HepG2 (cell line): ENCODE measurements at regions of chr7 and their contacts with region 1.

Region 1: DNA sequence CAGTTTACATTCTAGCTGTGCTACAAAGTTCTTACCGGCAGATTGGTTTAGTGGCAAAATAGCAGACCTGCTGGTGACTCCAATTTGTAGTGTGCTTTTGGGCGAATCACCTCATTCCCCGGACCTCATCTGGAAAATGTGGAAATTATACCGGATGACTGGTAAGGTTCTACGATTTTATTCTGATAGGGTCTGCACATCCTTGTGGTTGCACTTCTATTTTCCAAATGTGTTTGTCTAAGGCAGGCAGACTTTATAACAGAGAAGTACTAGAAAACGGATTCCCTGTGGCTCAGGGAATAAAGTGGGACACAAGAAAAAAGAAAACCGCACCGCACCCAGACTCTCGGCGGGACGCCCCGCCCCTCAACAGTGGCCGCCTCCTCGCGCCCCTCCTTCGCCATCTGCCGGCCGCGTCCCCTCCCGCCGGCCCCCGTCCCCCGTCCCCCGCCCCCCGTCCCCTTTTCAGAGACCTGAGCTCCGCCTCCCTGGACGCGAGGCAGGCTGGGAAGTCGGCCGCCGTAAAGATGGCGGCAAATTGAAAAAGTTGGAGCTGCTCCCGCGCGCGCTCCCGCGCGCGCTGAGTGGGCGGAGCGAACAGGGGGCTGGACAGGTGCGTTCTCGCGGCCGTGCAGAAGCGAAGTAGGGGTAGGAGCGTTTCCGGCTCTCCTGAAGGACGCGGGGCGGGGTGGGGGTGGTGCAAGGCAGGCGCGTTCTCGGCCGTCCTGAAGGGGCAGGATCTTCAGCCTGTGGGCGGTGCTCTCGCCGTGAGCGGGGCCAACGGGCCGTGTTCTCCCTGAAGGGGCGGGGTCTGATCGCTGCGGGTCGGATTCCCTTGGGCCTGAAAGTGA is 531 bp upstream of the CCM2 start:
- DNase-seq: peak; percentile 97
- ATAC-seq: peak; percentile 95
- H3K4me3 ChIP-seq: peak overlapping the region; percentile 74 to 99 (median 80)
- H3K27ac ChIP-seq: peak overlapping the region; percentile 70
- H3K4me1 ChIP-seq: peaks cover 23% of the 10 kb centered on the region
- H3K27me3 ChIP-seq: no peaks in the 10 kb centered on the region
- CTCF ChIP-seq: peak; percentile 26; the same call in 1 of the 2 replicates
- EP300 ChIP-seq: no peak
- POLR2A ChIP-seq: peak; percentile 25 to 59; a peak in 3 of 4 replicates
- RAD21 ChIP-seq: 0 out of 2 replicates have a peak, but pooled peaks have one; percentile 18

Region 2: GRCh38 chr7:44735403-44736165 is 263.9 kb before region 1 on chr7:
- CTCF ChIA-PET with region 1: no interaction called
- POLR2A ChIA-PET with region 1: no interaction called
- in situ Hi-C with region 1: no loop called
- intact Hi-C with region 1: no loop called
- DNase-seq: peak; percentile 30
- ATAC-seq: no peak
- H3K4me3 ChIP-seq: no peak overlapping the region
- H3K27ac ChIP-seq: no peak overlapping the region
- H3K4me1 ChIP-seq: peaks cover 5% of the 10 kb centered on the region; the same call in 1 of the 2 replicates
- H3K27me3 ChIP-seq: no peaks in the 10 kb centered on the region
- CTCF ChIP-seq: no peak
- EP300 ChIP-seq: no peak
- POLR2A ChIP-seq: no peak
- RAD21 ChIP-seq: no peak

Region 3: GRCh38 chr7:44914992-44915607 is 84.4 kb before region 1 on chr7:
- CTCF ChIA-PET with region 1: no interaction called
- POLR2A ChIA-PET with region 1: no interaction called
- in situ Hi-C with region 1: no loop called
- intact Hi-C with region 1: no loop called
- DNase-seq: no peak
- ATAC-seq: no peak
- H3K4me3 ChIP-seq: no peak overlapping the region
- H3K27ac ChIP-seq: no peak overlapping the region
- H3K4me1 ChIP-seq: peaks cover 8% of the 10 kb centered on the region
- H3K27me3 ChIP-seq: peaks cover 1 to 4% of the 10 kb centered on the region in 2 experiments; a peak in 2 of 5 replicates
- CTCF ChIP-seq: no peak
- EP300 ChIP-seq: no peak
- POLR2A ChIP-seq: no peak
- RAD21 ChIP-seq: no peak

Region 4: GRCh38 chr7:44986218-44987053 is 13.0 kb before region 1 on chr7:
- CTCF ChIA-PET with region 1: no interaction called
- POLR2A ChIA-PET with region 1: no interaction called
- in situ Hi-C with region 1: no loop called
- intact Hi-C with region 1: no loop called
- DNase-seq: no peak
- ATAC-seq: no peak
- H3K4me3 ChIP-seq: no peak overlapping the region
- H3K27ac ChIP-seq: no peak overlapping the region
- H3K4me1 ChIP-seq: peaks cover 23% of the 10 kb centered on the region
- H3K27me3 ChIP-seq: no peaks in the 10 kb centered on the region
- CTCF ChIP-seq: no peak
- EP300 ChIP-seq: no peak
- POLR2A ChIP-seq: no peak
- RAD21 ChIP-seq: no peak

Region 5: DNA sequence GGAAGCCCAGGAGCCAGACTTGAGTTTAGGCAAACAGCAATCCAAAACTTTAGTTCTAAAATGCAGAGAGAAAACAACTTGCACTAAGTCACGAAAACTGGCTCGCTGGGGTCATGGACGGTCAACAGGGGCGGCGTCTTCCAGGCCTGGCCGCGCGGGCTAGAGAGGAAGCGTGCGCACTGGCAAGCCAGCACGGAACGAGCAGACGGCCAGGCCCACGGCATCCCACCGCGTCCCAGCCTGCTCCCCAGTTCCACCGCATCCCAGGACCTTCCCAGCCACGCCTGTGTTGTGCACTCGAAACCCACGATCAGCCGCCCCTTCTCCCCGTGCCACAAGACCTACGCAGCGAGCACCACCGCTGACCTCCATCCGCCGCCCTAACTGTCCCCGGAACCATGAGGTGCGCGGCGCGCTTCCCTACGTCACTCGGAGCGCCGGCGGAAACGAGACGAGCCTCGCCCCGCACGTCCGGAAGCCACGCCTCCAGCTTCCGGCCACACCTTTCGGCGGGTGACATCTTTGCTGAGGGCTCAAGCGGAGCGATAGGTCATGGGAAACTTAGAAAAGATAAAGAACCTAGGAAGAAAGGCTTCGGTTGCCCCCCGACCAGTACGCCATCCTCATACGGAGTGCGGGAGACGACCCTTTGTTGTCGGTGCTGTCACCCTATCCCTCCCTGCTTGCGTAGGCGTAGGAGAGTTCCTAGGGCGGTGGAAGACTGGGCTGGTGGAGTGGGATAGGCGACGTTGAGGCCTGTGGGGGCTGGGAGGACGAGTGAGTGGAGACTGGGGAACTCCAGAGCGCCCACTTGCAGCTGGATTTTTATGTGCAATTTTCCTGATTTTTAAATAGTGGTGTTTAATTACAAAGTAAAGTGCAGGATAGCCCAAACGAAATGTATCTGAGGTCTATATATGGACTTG is 112.1 kb after region 1 on chr7 and contains the start of gene TBRG4:
- CTCF ChIA-PET with region 1: no interaction called
- POLR2A ChIA-PET with region 1: interaction called, 15 read pairs
- in situ Hi-C with region 1: no loop called
- intact Hi-C with region 1: loop called (anchors 5 kb)
- DNase-seq: peak; percentile 90
- ATAC-seq: peak; percentile 92
- H3K4me3 ChIP-seq: peak within 1 kb of the TSS; percentile 83 to 97 (median 92)
- H3K27ac ChIP-seq: peak within 1 kb of the TSS; percentile 94
- H3K4me1 ChIP-seq: peaks cover 57% of the 10 kb centered on the region
- H3K27me3 ChIP-seq: no peaks in the 10 kb centered on the region; a peak in 1 of 5 replicates
- CTCF ChIP-seq: peak; percentile 55
- EP300 ChIP-seq: peak in 1 of 2 experiments; percentile 27; a peak in 1 of 4 replicates
- POLR2A ChIP-seq: peak; percentile 97
- RAD21 ChIP-seq: peak; percentile 43; the same call in 1 of the 2 replicates
- total RNA-seq, gene TBRG4: 87.8 and 90.3 TPM in 2 replicates